Activated CD4-positive, alpha-beta T cell treated with anti-CD3 and anti-CD28 coated beads, Interleukin-2, amount 10 ng/mL, durations not matched to agents 24 days and 14 days (primary cell): ENCODE measurements at regions of chr2 and their contacts with region 1.

Region 1: DNA sequence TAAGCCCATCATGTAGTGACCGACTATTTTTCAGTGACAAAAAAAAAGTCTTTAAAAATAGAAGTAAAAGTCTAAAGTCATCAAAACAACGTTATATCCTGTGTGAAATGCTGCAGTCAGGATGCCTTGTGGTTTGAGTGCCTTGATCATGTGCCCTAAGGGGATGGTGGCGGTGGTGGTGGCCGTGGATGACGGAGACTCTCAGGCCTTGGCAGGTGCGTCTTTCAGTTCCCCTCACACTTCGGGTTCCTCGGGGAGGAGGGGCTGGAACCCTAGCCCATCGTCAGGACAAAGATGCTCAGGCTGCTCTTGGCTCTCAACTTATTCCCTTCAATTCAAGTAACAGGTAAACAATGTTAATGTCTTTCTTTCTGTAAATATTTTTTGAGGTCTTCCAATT is at the start of gene CD28:
- DNase-seq: peak; percentile 97
- H3K4me3 Mint-ChIP-seq: peak within 1 kb of the TSS; percentile 92
- H3K27ac Mint-ChIP-seq: peak within 1 kb of the TSS; percentile 98
- H3K4me1 Mint-ChIP-seq: peaks cover 46% of the 10 kb centered on the region
- H3K27me3 Mint-ChIP-seq: no peaks in the 10 kb centered on the region
- total RNA-seq, gene CD28: 130 and 132 TPM in 2 replicates

Region 2: DNA sequence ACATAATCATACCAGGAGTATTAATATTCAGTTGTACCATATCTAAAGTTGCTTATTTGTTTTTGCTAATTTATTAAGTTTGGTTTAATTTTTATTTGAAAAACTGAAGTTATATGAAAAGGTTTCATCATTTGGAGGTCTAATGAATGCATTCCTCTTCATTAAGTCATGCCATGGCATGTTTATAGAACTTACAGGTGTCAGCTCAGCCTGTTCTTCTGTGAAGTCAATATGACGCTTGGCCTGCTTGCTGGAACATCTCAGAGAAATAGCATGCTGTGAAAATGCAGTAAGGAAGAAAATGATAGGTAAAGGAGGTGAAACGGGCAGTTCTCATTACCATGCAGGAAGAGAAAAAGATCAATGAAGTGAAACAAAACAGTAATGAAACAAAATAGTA is 229.5 kb before region 1 on chr2:
- intact Hi-C with region 1: no loop called
- DNase-seq: no peak
- H3K4me3 Mint-ChIP-seq: no peak overlapping the region
- H3K27ac Mint-ChIP-seq: no peak overlapping the region
- H3K4me1 Mint-ChIP-seq: no peaks in the 10 kb centered on the region
- H3K27me3 Mint-ChIP-seq: no peaks in the 10 kb centered on the region

Region 3: DNA sequence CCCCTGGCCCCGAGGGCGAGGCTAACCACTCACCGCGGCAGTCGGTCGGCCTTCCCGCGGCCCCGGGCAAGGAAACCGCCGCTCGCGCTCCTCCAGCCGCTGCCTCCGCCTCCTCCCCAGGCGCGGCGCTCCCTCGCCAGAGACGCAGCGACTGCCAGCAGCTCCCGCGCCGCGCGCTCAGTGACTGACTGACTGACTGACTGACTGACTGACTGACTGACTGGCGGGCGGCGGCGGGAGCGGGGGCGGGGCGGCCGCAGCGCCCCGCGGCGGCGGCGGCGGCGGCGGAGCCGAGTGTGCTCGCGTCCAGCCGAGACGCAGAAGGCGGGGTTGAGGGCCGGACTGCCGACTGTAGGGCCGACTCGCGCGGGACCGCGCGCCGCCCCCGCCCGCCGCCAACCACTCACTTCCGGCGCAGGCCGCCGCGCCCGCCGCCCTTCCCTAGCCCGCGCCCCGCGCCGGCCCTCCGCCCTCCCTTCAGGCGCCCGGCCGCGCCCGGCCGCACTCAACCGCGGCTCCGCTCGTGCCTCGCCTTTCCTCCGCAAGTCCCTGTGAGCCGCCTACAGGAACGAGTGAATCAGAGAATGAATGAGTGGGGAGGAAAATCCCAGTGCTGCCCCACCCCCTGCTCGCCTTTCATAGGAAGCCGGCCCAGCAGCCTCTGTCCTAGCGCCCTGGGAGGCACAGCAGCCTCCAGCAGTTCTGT is 171.2 kb before region 1 on chr2 and contains the start of gene RAPH1:
- intact Hi-C with region 1: loop called (anchors 2 kb)
- DNase-seq: peak; percentile 88
- H3K4me3 Mint-ChIP-seq: peak within 1 kb of the TSS; percentile 87
- H3K27ac Mint-ChIP-seq: peak within 1 kb of the TSS; percentile 91
- H3K4me1 Mint-ChIP-seq: peaks cover 28% of the 10 kb centered on the region
- H3K27me3 Mint-ChIP-seq: peaks cover 57% of the 10 kb centered on the region
- total RNA-seq, gene RAPH1: 6.0 and 6.1 TPM in 2 replicates

Region 4: DNA sequence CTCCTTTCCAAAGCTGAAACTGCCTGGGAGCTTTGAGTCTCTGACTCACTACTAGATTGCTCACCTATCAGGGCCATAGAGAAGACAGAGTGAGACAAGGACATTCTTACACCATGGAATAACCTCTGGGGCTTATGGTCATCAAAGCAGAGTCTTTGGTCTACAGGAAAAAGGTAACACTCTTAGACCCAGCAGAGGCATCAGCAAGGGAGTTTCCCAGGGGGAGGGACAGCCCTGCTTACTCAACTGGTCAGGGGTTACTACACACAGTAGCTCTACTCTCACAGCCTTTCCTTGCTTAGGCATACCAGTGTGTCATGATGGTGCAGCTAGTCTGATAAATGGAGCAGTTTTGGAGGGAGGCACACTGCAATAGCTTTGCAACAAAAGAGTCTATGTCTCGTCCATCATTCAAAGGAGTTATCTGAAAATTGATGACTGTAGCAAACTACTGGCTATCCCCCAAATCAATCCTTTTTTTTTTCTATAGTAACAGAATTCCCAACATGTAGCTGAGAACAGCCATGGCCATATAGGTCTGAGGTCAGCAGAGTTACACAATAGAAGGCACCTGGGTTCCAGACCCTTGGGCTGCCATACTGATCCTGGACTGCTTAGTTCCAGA is 22.4 kb before region 1 on chr2:
- intact Hi-C with region 1: loop called (anchors 2 kb)
- DNase-seq: peak; percentile 72
- H3K4me3 Mint-ChIP-seq: no peak overlapping the region
- H3K27ac Mint-ChIP-seq: no peak overlapping the region
- H3K4me1 Mint-ChIP-seq: peaks cover 38% of the 10 kb centered on the region
- H3K27me3 Mint-ChIP-seq: no peaks in the 10 kb centered on the region

Region 5: DNA sequence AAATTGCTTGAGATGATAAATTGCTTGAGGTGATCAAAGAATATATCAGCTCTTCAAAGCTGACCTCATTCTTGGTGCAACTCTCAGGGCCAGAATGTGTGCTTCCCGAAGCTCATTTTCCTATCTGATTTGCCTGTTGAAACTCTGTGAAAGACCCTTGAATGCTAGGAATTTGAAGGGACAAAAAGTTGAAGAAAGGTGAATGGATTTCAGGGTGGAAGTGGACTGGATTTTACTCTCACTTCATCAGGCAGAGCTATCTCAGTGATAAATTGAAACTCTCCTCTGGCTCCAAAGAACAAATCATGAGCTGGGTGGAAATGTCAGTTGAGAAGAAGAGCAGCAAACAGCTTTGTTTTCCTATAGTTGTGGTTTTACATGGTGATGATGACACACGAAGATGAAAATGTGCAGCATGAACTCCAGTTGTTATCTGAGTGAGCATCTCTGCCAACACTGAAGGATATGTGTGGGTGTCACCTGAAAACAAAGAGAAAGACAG is 34.4 kb after region 1 on chr2:
- intact Hi-C with region 1: loop called (anchors 1 kb)
- DNase-seq: peak; percentile 89
- H3K4me3 Mint-ChIP-seq: peak overlapping the region; percentile 69
- H3K27ac Mint-ChIP-seq: peak overlapping the region; percentile 96
- H3K4me1 Mint-ChIP-seq: peaks cover 72% of the 10 kb centered on the region
- H3K27me3 Mint-ChIP-seq: no peaks in the 10 kb centered on the region

Region 6: GRCh38 chr2:203871371-203871983 is 165.1 kb after region 1 on chr2:
- intact Hi-C with region 1: loop called (anchors 1 kb)
- DNase-seq: peak; percentile 88
- H3K4me3 Mint-ChIP-seq: peak overlapping the region; percentile 90
- H3K27ac Mint-ChIP-seq: peak overlapping the region; percentile 100
- H3K4me1 Mint-ChIP-seq: peaks cover 60% of the 10 kb centered on the region
- H3K27me3 Mint-ChIP-seq: no peaks in the 10 kb centered on the region